Calu3 (cell line): ENCODE measurements at regions of chr11 and their contacts with region 1.

Region 1: DNA sequence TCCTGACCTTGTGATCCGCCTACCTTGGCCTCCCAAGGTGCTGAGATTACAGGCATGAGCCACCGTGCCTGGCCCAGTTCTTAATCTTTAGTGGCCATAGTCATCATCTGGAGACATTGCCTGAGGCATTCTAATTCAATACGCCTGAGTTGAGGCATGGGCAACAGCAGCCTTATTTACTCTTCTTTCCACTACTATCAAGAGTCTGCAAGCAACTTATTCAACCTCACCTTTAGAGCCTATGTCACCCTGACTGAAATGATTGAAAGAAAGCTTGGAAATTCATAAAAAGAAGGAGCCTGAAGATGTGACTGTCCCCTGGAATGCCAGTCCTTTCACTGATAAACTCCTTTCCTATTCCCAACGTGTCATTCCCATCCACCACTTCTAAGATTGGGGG is 15.8 kb upstream of the PAFAH1B2 start:
- DNase-seq: no peak
- H3K4me3 Mint-ChIP-seq: no peak overlapping the region
- H3K27ac Mint-ChIP-seq: no peak overlapping the region
- H3K4me1 Mint-ChIP-seq: no peaks in the 10 kb centered on the region
- H3K27me3 Mint-ChIP-seq: peaks cover 13% of the 10 kb centered on the region
- CTCF ChIP-seq: no peak

Region 2: GRCh38 chr11:117171404-117172061 is 43.2 kb after region 1 on chr11:
- CTCF ChIA-PET with region 1: interaction called, 11 read pairs
- intact Hi-C with region 1: no loop called
- DNase-seq: no peak
- H3K4me3 Mint-ChIP-seq: no peak overlapping the region
- H3K27ac Mint-ChIP-seq: no peak overlapping the region
- H3K4me1 Mint-ChIP-seq: no peaks in the 10 kb centered on the region
- H3K27me3 Mint-ChIP-seq: no peaks in the 10 kb centered on the region
- CTCF ChIP-seq: no peak